HAP-1 (cell line): ENCODE measurements at regions of chr2 and their contacts with region 1.

Region 1: GRCh38 chr2:233026192-233026813 is 6.2 kb upstream of the NEU2 start:
- DNase-seq: no peak
- H3K4me3 ChIP-seq: no peak overlapping the region
- H3K4me1 ChIP-seq: no peaks in the 10 kb centered on the region
- H3K27me3 ChIP-seq: no peaks in the 10 kb centered on the region

Region 2: GRCh38 chr2:232611551-232612218 is 414.6 kb before region 1 on chr2:
- in situ Hi-C with region 1: loop called (anchors 25 kb)
- DNase-seq: peak; percentile 41 to 91
- H3K4me3 ChIP-seq: no peak overlapping the region
- H3K4me1 ChIP-seq: peaks cover 5% of the 10 kb centered on the region; the same call in 1 of the 2 replicates
- H3K27me3 ChIP-seq: no peaks in the 10 kb centered on the region

Region 3: GRCh38 chr2:232869138-232870017 is 156.9 kb before region 1 on chr2:
- in situ Hi-C with region 1: loop called (anchors 10 kb)
- DNase-seq: no peak
- H3K4me3 ChIP-seq: no peak overlapping the region
- H3K4me1 ChIP-seq: no peaks in the 10 kb centered on the region
- H3K27me3 ChIP-seq: no peaks in the 10 kb centered on the region

Region 4: DNA sequence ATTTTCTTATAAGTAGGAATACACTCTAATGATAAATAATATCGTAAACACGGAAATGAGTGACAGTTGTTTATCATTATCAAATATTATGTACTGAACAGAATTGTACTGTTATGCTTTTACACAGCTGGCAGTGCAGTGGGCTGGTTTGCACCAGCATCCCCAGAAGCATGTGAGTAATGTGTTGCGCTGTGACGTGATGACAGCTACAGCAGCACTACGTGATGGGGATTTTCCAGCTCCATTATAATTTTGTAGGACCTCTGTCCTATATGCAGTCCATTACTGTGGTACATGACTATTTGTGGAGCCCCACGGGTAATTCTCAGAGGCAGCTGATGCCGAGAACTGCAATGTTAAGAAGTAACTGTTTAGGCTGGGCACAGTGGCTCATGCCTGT is 147.8 kb after region 1 on chr2:
- in situ Hi-C with region 1: no loop called
- DNase-seq: no peak
- H3K4me3 ChIP-seq: no peak overlapping the region
- H3K4me1 ChIP-seq: peaks cover 4% of the 10 kb centered on the region; the same call in 1 of the 2 replicates
- H3K27me3 ChIP-seq: no peaks in the 10 kb centered on the region